CD4-positive, alpha-beta T cell (primary cell): ENCODE measurements at regions of chr15 and their contacts with region 1.

Region 1: GRCh38 chr15:55407949-55408791 is at the starts of genes CCPG1 and PIERCE2:
- DNase-seq: peak; percentile 73 to 96 (median 80)
- ATAC-seq: peak; percentile 91
- H3K4me3 ChIP-seq: peak within 1 kb of the TSS; percentile 67
- H3K4me3 Mint-ChIP-seq: peak within 1 kb of the TSS; percentile 94
- H3K27ac ChIP-seq: peak within 1 kb of the TSS; percentile 72 to 73
- H3K27ac Mint-ChIP-seq: peak within 1 kb of the TSS; percentile 73
- H3K4me1 ChIP-seq: peaks cover 30% of the 10 kb centered on the region
- H3K4me1 Mint-ChIP-seq: peaks cover 43% of the 10 kb centered on the region
- H3K27me3 ChIP-seq: no peaks in the 10 kb centered on the region
- H3K27me3 Mint-ChIP-seq: no peaks in the 10 kb centered on the region
- CTCF ChIP-seq: peak; percentile 93
- total RNA-seq, gene CCPG1: 29.9 to 31.5 TPM
- total RNA-seq, gene PIERCE2: not detected

Region 2: DNA sequence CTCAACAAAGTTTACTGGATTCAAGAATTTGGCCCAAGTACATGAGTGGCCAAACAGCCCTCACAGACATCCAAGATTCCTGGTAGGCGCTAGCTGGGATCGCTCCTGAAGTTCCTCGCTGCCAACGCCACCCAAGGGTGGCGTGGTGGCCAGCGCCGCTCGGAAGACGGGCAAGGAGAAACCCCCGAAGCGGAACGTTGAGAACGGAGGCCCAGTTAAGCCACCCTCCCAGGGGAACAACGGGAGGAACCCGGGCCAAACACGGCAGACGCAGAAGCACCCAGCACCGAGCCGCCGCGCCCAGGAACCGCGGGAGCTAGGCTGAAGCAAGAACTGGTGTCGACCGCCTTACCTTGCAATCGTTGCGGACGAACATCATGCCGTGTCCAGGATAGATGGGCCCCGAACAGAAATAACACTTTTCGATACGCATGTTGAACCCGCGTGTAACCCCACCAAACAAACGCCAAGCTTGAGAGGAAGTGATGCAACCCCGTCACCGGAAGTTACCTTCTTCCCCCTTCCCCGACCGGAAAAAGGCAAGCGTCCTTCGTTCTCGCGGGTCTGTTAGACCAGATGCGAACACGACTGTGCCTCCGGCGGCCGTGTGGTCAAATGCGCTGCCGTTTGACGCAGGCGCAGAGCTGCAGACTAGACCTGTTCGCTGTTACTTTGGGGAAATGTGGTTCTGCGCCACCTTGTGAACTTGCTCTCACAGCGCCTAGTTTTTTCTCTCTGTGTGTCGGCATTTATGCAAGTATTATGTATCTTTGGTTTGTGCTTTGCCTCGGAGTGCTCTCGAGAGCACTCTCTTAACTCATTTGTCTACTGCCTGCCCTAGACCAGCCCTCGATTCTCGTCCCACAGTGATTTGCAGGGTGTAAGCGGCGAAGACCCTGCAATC is 211.5 kb before region 1 on chr15 and contains the start of gene RSL24D1:
- CTCF ChIA-PET with region 1: interaction called, 13 read pairs
- POLR2A ChIA-PET with region 1: interaction called, 19 read pairs
- intact Hi-C with region 1: loop called (anchors 5 kb)
- DNase-seq: peak; percentile 91 to 100 (median 95)
- ATAC-seq: peak; percentile 96
- H3K4me3 ChIP-seq: peak within 1 kb of the TSS; percentile 89
- H3K4me3 Mint-ChIP-seq: no peak within 1 kb of the TSS
- H3K27ac ChIP-seq: peak within 1 kb of the TSS; percentile 79 to 92
- H3K27ac Mint-ChIP-seq: no peak within 1 kb of the TSS
- H3K4me1 ChIP-seq: peaks cover 18% of the 10 kb centered on the region
- H3K4me1 Mint-ChIP-seq: peaks cover 21% of the 10 kb centered on the region
- H3K27me3 ChIP-seq: no peaks in the 10 kb centered on the region
- H3K27me3 Mint-ChIP-seq: no peaks in the 10 kb centered on the region
- CTCF ChIP-seq: peak; percentile 55
- total RNA-seq, gene RSL24D1: 163 to 164 TPM

Region 3: DNA sequence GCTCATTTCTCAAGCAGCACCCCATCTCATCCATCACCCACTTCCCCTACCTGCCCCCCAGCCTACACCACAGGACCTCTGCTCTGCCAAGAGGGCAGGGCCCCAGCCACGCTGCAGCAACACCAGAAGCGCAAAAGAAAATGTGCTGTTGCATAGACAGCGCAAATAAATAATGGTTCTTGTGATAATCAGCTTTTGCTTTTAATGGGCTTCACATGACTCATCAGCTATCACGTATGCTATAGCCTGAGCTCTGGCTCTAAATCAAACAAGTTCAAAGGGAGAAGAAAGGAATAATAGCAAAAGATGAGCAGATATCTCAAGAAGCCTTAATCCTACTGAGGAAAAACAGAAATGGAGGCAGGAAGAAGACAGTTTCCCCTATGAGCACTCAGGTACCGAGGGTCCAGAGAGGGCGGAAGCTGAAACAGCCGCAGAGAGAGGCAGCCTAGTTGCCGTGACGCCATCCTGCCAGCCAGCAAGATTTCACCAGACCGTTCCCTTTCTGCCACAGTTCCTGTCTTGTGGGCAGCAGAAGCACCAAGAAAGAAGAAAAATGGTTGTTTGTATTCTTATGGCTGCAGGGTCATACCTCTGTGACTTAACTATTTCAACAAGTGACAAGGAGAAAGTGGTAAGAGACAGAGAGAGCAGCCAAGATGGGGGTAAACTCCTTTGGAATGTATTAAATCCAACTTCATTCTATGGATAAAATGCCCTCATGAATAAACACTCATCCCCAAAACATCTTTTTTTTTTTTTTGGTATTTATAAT is 140.6 kb before region 1 on chr15:
- CTCF ChIA-PET with region 1: no interaction called
- POLR2A ChIA-PET with region 1: interaction called, 10 read pairs
- intact Hi-C with region 1: no loop called
- DNase-seq: peak; percentile 51 to 92 (median 66)
- ATAC-seq: peak; percentile 90
- H3K4me3 ChIP-seq: peak overlapping the region; percentile 45
- H3K4me3 Mint-ChIP-seq: peak overlapping the region; percentile 70
- H3K27ac ChIP-seq: peak overlapping the region; percentile 52 to 82
- H3K27ac Mint-ChIP-seq: peak overlapping the region; percentile 89
- H3K4me1 ChIP-seq: peaks cover 42% of the 10 kb centered on the region
- H3K4me1 Mint-ChIP-seq: peaks cover 60% of the 10 kb centered on the region
- H3K27me3 ChIP-seq: no peaks in the 10 kb centered on the region
- H3K27me3 Mint-ChIP-seq: no peaks in the 10 kb centered on the region
- CTCF ChIP-seq: no peak

Region 4: GRCh38 chr15:55318588-55319494 is 89.3 kb before region 1 on chr15 and contains the starts of genes PIGB and PIGBOS1:
- CTCF ChIA-PET with region 1: interaction called, 9 read pairs
- POLR2A ChIA-PET with region 1: interaction called, 45 read pairs
- intact Hi-C with region 1: loop called (anchors 5 kb)
- DNase-seq: peak; percentile 62 to 90 (median 70)
- ATAC-seq: peak; percentile 90
- H3K4me3 ChIP-seq: peak within 1 kb of the TSS; percentile 69
- H3K4me3 Mint-ChIP-seq: peak within 1 kb of the TSS; percentile 99
- H3K27ac ChIP-seq: peak within 1 kb of the TSS; percentile 88 to 93
- H3K27ac Mint-ChIP-seq: peak within 1 kb of the TSS; percentile 100
- H3K4me1 ChIP-seq: peaks cover 33% of the 10 kb centered on the region
- H3K4me1 Mint-ChIP-seq: peaks cover 80% of the 10 kb centered on the region
- H3K27me3 ChIP-seq: no peaks in the 10 kb centered on the region
- H3K27me3 Mint-ChIP-seq: no peaks in the 10 kb centered on the region
- CTCF ChIP-seq: no peak
- total RNA-seq, gene PIGB: 21.5 to 21.6 TPM
- total RNA-seq, gene PIGBOS1: 6.2 to 10.1 TPM

Region 5: DNA sequence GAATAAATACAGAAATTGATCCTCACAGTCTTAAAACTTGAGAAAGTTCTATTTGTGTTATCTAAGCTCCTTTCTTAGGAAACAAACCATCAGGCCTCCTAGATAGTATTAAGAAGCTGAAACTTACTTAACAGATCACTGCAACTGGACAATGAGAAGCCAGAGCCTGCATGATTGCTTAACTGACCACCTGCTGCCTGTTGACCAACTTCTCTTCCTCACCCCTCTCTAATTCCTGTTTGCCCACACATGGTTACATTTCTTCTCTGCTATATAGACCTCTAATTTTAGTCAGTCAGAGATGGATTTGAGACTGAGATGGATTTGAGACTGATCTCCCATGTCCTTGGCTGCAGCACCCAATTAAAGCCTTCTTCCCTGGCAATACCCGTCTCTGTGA is 13.5 kb before region 1 on chr15:
- CTCF ChIA-PET with region 1: interaction called, 15 read pairs
- POLR2A ChIA-PET with region 1: interaction called, 3 read pairs
- intact Hi-C with region 1: no loop called
- DNase-seq: peak in 1 of 14 experiments; percentile 7
- ATAC-seq: no peak
- H3K4me3 ChIP-seq: no peak overlapping the region
- H3K4me3 Mint-ChIP-seq: no peak overlapping the region
- H3K27ac ChIP-seq: no peak overlapping the region
- H3K27ac Mint-ChIP-seq: no peak overlapping the region
- H3K4me1 ChIP-seq: no peaks in the 10 kb centered on the region
- H3K4me1 Mint-ChIP-seq: peaks cover 42% of the 10 kb centered on the region
- H3K27me3 ChIP-seq: no peaks in the 10 kb centered on the region
- H3K27me3 Mint-ChIP-seq: no peaks in the 10 kb centered on the region
- CTCF ChIP-seq: no peak

Region 6: DNA sequence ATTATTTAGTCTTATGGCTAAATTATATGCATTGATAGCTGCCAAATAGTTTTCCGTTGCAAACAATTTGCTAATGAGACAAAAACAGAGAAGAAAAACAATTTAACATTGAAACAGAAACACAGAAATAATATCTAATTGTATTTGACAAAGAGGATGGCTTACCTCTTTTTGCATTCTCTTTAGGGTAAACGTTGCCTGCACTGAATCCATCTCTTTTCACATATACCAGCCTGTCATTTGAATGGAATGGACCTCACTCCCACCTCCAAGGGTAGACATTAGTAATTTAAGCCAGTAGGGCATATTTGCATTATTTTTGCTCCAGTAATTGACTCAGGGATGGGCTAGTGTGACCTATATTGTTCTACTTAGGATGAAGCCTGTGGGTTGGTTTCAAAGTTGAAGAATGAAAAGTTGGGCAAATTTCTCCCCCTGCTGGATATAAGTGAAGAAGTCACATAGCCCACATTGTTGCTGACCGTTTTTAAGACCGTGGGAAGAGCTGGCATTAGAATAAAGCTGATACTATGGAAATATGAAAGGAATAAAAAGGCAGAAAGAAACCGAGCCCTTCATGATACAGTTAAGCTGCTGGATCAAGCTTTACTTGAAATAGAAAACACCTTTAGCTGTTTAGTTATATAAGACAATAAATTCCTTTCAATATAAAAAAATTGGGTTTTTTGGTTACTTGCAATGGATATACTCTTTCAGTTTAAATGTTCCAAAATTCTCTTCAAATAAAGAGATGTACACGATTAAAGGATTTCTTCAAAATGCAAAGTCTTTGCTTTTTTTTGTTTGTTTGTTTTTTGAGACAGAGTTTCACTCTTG is 27.0 kb after region 1 on chr15:
- CTCF ChIA-PET with region 1: interaction called, 42 read pairs
- POLR2A ChIA-PET with region 1: interaction called, 9 read pairs
- intact Hi-C with region 1: loop called in 1 of 2 experiments (anchors 2 kb)
- DNase-seq: peak in 4 of 14 experiments; percentile 19 to 66 (median 55)
- ATAC-seq: peak; percentile 62
- H3K4me3 ChIP-seq: no peak overlapping the region
- H3K4me3 Mint-ChIP-seq: no peak overlapping the region
- H3K27ac ChIP-seq: no peak overlapping the region
- H3K27ac Mint-ChIP-seq: no peak overlapping the region
- H3K4me1 ChIP-seq: no peaks in the 10 kb centered on the region
- H3K4me1 Mint-ChIP-seq: no peaks in the 10 kb centered on the region
- H3K27me3 ChIP-seq: no peaks in the 10 kb centered on the region
- H3K27me3 Mint-ChIP-seq: no peaks in the 10 kb centered on the region
- CTCF ChIP-seq: peak; percentile 67

Region 7: DNA sequence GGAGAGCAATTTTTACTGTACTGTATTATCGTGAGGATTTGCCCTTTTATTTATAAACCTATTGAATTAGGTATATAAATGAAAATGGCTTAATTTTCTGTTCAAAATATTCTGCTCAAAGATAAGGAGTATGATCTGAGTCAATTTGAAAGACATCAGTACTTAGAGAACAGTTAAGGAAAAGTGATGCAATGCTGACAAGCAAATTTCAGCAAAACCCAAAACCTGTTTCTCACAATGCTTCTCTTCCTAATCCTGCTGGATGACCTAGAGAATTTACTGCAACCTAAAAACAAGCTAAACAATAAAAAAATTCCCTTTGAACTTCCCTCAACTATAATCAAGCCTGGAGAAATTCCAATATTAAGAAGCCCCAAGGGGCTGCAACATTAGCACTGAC is 752.8 kb after region 1 on chr15:
- CTCF ChIA-PET with region 1: no interaction called
- POLR2A ChIA-PET with region 1: no interaction called
- intact Hi-C with region 1: no loop called
- DNase-seq: no peak
- ATAC-seq: no peak
- H3K4me3 ChIP-seq: no peak overlapping the region
- H3K4me3 Mint-ChIP-seq: no peak overlapping the region
- H3K27ac ChIP-seq: no peak overlapping the region
- H3K27ac Mint-ChIP-seq: peak overlapping the region; percentile 18
- H3K4me1 ChIP-seq: peaks cover 7% of the 10 kb centered on the region
- H3K4me1 Mint-ChIP-seq: peaks cover 65% of the 10 kb centered on the region
- H3K27me3 ChIP-seq: no peaks in the 10 kb centered on the region
- H3K27me3 Mint-ChIP-seq: no peaks in the 10 kb centered on the region
- CTCF ChIP-seq: no peak

Region 8: GRCh38 chr15:56207092-56207491 is 798.9 kb after region 1 on chr15:
- CTCF ChIA-PET with region 1: no interaction called
- POLR2A ChIA-PET with region 1: no interaction called
- intact Hi-C with region 1: no loop called
- DNase-seq: peak in 2 of 14 experiments; percentile 6 to 41
- ATAC-seq: peak; percentile 58
- H3K4me3 ChIP-seq: no peak overlapping the region
- H3K4me3 Mint-ChIP-seq: peak overlapping the region; percentile 5
- H3K27ac ChIP-seq: peak overlapping the region in 1 of 2 donors; percentile 63
- H3K27ac Mint-ChIP-seq: peak overlapping the region; percentile 88
- H3K4me1 ChIP-seq: peaks cover 7% of the 10 kb centered on the region
- H3K4me1 Mint-ChIP-seq: peaks cover 93% of the 10 kb centered on the region
- H3K27me3 ChIP-seq: no peaks in the 10 kb centered on the region
- H3K27me3 Mint-ChIP-seq: no peaks in the 10 kb centered on the region
- CTCF ChIP-seq: no peak